Panc1 (cell line): ENCODE measurements at regions of chr5 and their contacts with region 1.

Region 1: DNA sequence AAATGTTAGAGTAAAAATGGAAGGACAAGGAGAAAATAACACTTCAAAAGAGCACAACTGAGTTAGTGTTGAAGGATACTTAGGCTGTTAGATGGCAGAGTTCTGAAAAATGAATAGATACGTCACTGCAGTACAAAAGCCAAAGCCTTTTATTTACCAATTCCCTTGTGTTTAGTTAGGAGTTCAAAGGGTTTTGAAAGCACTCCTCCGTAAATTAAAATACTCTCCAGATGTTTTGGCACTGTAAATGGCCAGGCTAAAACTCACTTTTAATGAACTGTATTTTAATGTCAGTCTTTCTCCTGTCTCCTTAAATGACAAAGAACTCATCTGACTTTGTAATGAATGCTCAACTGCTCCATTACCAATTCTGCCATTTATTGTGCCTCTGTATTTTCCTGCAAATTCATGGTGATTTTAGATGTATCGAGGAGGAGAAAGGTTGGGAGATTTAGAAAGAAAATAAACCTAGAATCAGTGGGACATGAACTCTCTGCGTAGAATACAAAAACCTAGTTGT is 1727.2 kb downstream of the MAT2B start:
- DNase-seq: no peak
- ATAC-seq: no peak
- H3K4me3 ChIP-seq: no peak overlapping the region
- H3K27ac ChIP-seq: no peak overlapping the region
- H3K4me1 ChIP-seq: no peaks in the 10 kb centered on the region
- H3K27me3 ChIP-seq: no peaks in the 10 kb centered on the region
- CTCF ChIP-seq: no peak

Region 2: DNA sequence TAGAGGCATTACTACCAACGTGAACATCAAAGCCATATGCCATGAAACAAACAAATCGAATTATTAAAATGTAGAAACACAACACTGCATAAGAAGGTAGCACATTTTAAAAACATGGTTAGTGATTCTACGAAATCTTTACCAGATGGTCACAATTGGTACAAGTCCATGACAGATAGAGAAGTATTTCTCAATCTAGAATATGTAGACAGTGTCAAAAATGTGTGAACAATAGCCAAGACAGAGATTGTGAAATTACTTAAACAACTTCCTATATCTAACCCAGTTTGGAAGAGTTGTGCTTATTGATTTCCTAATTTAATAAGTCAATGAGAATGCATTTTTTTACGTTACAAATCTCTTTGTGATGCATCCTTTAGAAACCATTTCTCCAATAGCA is 605.5 kb before region 1 on chr5:
- CTCF ChIA-PET with region 1: no interaction called
- POLR2A ChIA-PET with region 1: interaction called, 10 read pairs
- in situ Hi-C with region 1: no loop called
- intact Hi-C with region 1: no loop called
- DNase-seq: no peak
- ATAC-seq: no peak
- H3K4me3 ChIP-seq: no peak overlapping the region
- H3K27ac ChIP-seq: no peak overlapping the region
- H3K4me1 ChIP-seq: no peaks in the 10 kb centered on the region
- H3K27me3 ChIP-seq: no peaks in the 10 kb centered on the region
- CTCF ChIP-seq: no peak